ENCODE measurements at regions of chr12 and their contacts with region 1.

Region 1: GRCh38 chr12:98644711-98645402 is at the starts of genes APAF1 and IKBIP:
- DNase-seq: peak; percentile 96
- H3K4me3 Mint-ChIP-seq: peak within 1 kb of the TSS; percentile 92
- H3K27ac Mint-ChIP-seq: peak within 1 kb of the TSS; percentile 95
- H3K4me1 Mint-ChIP-seq: peaks cover 49% of the 10 kb centered on the region
- H3K27me3 Mint-ChIP-seq: no peaks in the 10 kb centered on the region
- total RNA-seq, gene APAF1: 21.2 and 23.9 TPM in 2 replicates
- total RNA-seq, gene IKBIP: 35.5 and 36.5 TPM in 2 replicates

Region 2: GRCh38 chr12:98037401-98038140 is 607.3 kb before region 1 on chr12:
- intact Hi-C with region 1: no loop called
- DNase-seq: no peak
- H3K4me3 Mint-ChIP-seq: no peak overlapping the region
- H3K27ac Mint-ChIP-seq: no peak overlapping the region
- H3K4me1 Mint-ChIP-seq: no peaks in the 10 kb centered on the region
- H3K27me3 Mint-ChIP-seq: no peaks in the 10 kb centered on the region

Region 3: GRCh38 chr12:98503592-98504367 is 141.1 kb before region 1 on chr12:
- intact Hi-C with region 1: loop called (anchors 1 kb)
- DNase-seq: peak; percentile 90
- H3K4me3 Mint-ChIP-seq: peak overlapping the region; percentile 91
- H3K27ac Mint-ChIP-seq: peak overlapping the region; percentile 99
- H3K4me1 Mint-ChIP-seq: peaks cover 27% of the 10 kb centered on the region
- H3K27me3 Mint-ChIP-seq: peaks cover 8% of the 10 kb centered on the region

Region 4: DNA sequence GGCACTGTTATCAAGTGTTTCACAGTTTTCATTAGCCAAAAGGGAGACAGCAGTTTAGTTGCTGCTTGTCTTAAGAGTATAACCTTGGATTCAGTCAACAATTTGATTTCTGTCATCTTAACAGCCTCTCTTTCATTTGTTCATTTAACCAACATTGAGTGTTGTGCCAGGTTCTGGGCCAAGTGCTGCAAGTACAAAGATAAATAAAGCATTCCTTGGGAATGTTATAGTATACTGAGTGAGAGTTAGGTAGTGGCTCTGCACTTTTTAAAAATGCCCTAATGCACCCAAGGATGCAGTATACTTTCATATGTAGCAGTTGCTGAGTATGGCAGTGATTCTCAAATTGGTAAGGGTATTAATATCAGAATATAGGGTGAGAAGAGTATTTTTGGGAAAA is 15.7 kb after region 1 on chr12:
- intact Hi-C with region 1: loop called (anchors 2 kb)
- DNase-seq: no peak
- H3K4me3 Mint-ChIP-seq: no peak overlapping the region
- H3K27ac Mint-ChIP-seq: peak overlapping the region; percentile 5
- H3K4me1 Mint-ChIP-seq: peaks cover 14% of the 10 kb centered on the region
- H3K27me3 Mint-ChIP-seq: no peaks in the 10 kb centered on the region

Region 5: DNA sequence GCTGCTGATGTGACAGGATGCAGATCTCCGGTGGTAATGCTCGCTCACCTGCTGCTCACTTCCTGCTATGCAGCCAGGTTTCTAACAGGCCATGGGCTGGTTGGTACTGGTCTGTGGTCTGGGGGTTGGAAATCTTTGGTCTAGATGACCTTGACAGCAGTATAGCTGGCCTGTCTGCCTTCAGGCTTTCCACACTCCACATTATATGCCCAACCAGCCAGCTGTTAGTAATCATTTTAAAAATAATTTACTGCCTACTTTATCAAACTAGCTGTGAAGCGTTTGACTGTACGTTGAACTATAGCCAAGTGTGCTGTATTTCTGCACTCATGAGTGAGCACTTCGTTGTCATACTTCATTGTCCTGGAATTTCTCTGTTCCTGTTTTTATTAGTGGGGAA is 578.7 kb after region 1 on chr12:
- intact Hi-C with region 1: no loop called
- DNase-seq: no peak
- H3K4me3 Mint-ChIP-seq: no peak overlapping the region
- H3K27ac Mint-ChIP-seq: no peak overlapping the region
- H3K4me1 Mint-ChIP-seq: no peaks in the 10 kb centered on the region
- H3K27me3 Mint-ChIP-seq: no peaks in the 10 kb centered on the region

Measured in activated T-helper 1 cell treated with anti-CD3 and anti-CD28 coated beads, Interleukin-12 subunit alpha, Interleukin-12 subunit beta, Interleukin-2, Interleukin-4 antibody, amounts not matched to agents 30 ng/mL and 10 ng/mL and 1 ng/mL, durations not matched to agents 14 hours and 24 hours and 36 hours (primary cell).